Calu3 (cell line): ENCODE measurements at regions of chr12 and their contacts with region 1.

Region 1: GRCh38 chr12:120317224-120318105 is 10.1 kb downstream of the PLA2G1B start:
- DNase-seq: peak; percentile 100
- H3K4me3 Mint-ChIP-seq: peak overlapping the region; percentile 86
- H3K27ac Mint-ChIP-seq: peak overlapping the region; percentile 97
- H3K4me1 Mint-ChIP-seq: peaks cover 35% of the 10 kb centered on the region
- H3K27me3 Mint-ChIP-seq: no peaks in the 10 kb centered on the region
- CTCF ChIP-seq: peak; percentile 60

Region 2: DNA sequence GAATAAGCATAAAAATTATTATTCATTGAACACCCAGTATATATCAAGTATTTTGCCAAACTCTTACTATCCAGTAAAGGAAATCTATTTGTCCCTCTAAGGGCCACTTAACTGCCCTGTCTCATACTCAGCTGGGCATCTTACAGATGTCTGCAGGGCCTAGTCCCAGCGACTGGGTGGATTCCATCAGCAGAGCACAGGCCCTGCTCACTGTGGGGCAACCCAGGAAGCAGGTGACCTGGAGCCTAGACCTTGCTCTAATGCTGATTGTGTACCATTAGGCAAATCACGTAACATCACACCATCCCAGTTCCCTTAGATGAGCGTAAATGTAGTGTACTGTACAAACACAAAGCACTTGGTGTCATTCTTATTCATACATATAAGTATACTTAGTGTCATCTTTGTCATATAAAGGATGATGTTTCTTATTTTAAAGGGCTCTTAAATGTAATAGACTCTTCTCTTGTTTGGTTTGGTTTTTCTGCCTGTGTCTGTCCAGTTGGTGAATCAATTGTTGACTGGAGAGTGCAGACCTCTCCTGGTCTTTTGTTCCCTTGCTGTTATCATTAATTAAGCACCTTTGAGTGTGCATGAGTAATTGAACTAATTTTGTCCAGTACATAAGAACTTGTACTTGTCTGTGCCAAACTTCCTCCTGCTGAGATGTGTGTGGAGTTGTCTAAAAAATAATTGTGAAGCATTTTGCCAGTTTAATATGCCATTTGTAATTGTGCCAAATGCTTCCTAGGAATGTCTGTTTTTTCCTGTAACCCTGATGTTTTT is 250.2 kb before region 1 on chr12:
- CTCF ChIA-PET with region 1: no interaction called
- intact Hi-C with region 1: no loop called
- DNase-seq: no peak
- H3K4me3 Mint-ChIP-seq: no peak overlapping the region
- H3K27ac Mint-ChIP-seq: no peak overlapping the region
- H3K4me1 Mint-ChIP-seq: peaks cover 18% of the 10 kb centered on the region
- H3K27me3 Mint-ChIP-seq: no peaks in the 10 kb centered on the region
- CTCF ChIP-seq: no peak

Region 3: GRCh38 chr12:120301962-120302815 is 15.3 kb before region 1 on chr12 and contains the start of gene SIRT4:
- CTCF ChIA-PET with region 1: interaction called, 22 read pairs
- intact Hi-C with region 1: no loop called
- DNase-seq: peak; percentile 91
- H3K4me3 Mint-ChIP-seq: peak within 1 kb of the TSS; percentile 94
- H3K27ac Mint-ChIP-seq: peak within 1 kb of the TSS; percentile 88
- H3K4me1 Mint-ChIP-seq: peaks cover 15% of the 10 kb centered on the region
- H3K27me3 Mint-ChIP-seq: peaks cover 13% of the 10 kb centered on the region
- CTCF ChIP-seq: no peak
- total RNA-seq, gene SIRT4: 1.1 and 1.6 TPM in 2 replicates

Region 4: DNA sequence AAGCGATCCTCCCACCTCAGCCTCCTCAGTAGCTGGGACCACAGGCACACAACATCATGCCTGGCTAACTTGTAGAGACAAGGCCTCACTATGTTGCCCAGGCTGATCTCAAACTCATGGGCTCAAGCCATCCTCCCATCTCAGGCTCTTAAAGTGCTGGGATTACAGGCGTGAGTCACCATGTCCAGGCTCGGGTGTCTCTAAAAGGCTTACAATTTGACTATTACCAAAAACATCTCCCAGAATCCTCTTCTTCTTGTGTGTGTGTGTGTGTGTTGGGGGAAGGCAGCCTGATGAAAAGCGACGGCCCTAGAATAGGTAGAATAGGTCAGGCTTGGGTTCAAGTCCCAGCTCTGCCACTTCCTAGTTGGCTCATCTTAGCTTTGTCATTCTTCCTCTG is 34.7 kb after region 1 on chr12:
- CTCF ChIA-PET with region 1: no interaction called
- intact Hi-C with region 1: no loop called
- DNase-seq: no peak
- H3K4me3 Mint-ChIP-seq: no peak overlapping the region
- H3K27ac Mint-ChIP-seq: no peak overlapping the region
- H3K4me1 Mint-ChIP-seq: peaks cover 8% of the 10 kb centered on the region
- H3K27me3 Mint-ChIP-seq: peaks cover 49% of the 10 kb centered on the region
- CTCF ChIP-seq: no peak